ENCODE measurements at regions of chr7 and their contacts with region 1.

Region 1: GRCh38 chr7:21253740-21254687 is 173.9 kb upstream of the SP4 start:
- DNase-seq: peak in 13 of 14 experiments; percentile 1 to 56 (median 16)
- ATAC-seq: peak; percentile 65
- H3K4me3 ChIP-seq: no peak overlapping the region
- H3K4me3 Mint-ChIP-seq: peak overlapping the region; percentile 25
- H3K27ac ChIP-seq: no peak overlapping the region
- H3K27ac Mint-ChIP-seq: no peak overlapping the region
- H3K4me1 ChIP-seq: peaks cover 2% of the 10 kb centered on the region
- H3K4me1 Mint-ChIP-seq: no peaks in the 10 kb centered on the region
- H3K27me3 ChIP-seq: peaks cover 13 to 43% of the 10 kb centered on the region in 2 experiments
- H3K27me3 Mint-ChIP-seq: peaks cover 71% of the 10 kb centered on the region
- CTCF ChIP-seq: peak; percentile 55

Region 2: GRCh38 chr7:19728716-19729115 is 1525.3 kb before region 1 on chr7:
- CTCF ChIA-PET with region 1: no interaction called
- POLR2A ChIA-PET with region 1: no interaction called
- intact Hi-C with region 1: loop called in 1 of 2 experiments (anchors 10 kb)
- DNase-seq: no peak
- ATAC-seq: no peak
- H3K4me3 ChIP-seq: no peak overlapping the region
- H3K4me3 Mint-ChIP-seq: no peak overlapping the region
- H3K27ac ChIP-seq: no peak overlapping the region
- H3K27ac Mint-ChIP-seq: no peak overlapping the region
- H3K4me1 ChIP-seq: no peaks in the 10 kb centered on the region
- H3K4me1 Mint-ChIP-seq: no peaks in the 10 kb centered on the region
- H3K27me3 ChIP-seq: peaks cover 0 to 16% of the 10 kb centered on the region in 2 experiments
- H3K27me3 Mint-ChIP-seq: peaks cover 58% of the 10 kb centered on the region
- CTCF ChIP-seq: no peak

Region 3: GRCh38 chr7:21507626-21508343 is 253.8 kb after region 1 on chr7:
- CTCF ChIA-PET with region 1: no interaction called
- POLR2A ChIA-PET with region 1: no interaction called
- intact Hi-C with region 1: loop called in 1 of 2 experiments (anchors 2 kb)
- DNase-seq: peak in 6 of 14 experiments; percentile 3 to 53 (median 38)
- ATAC-seq: no peak
- H3K4me3 ChIP-seq: no peak overlapping the region
- H3K4me3 Mint-ChIP-seq: no peak overlapping the region
- H3K27ac ChIP-seq: no peak overlapping the region
- H3K27ac Mint-ChIP-seq: no peak overlapping the region
- H3K4me1 ChIP-seq: no peaks in the 10 kb centered on the region
- H3K4me1 Mint-ChIP-seq: no peaks in the 10 kb centered on the region
- H3K27me3 ChIP-seq: no peaks in the 10 kb centered on the region
- H3K27me3 Mint-ChIP-seq: no peaks in the 10 kb centered on the region
- CTCF ChIP-seq: peak; percentile 40

Region 4: GRCh38 chr7:21526007-21526406 is 272.0 kb after region 1 on chr7:
- CTCF ChIA-PET with region 1: no interaction called
- POLR2A ChIA-PET with region 1: no interaction called
- intact Hi-C with region 1: loop called in 1 of 2 experiments (anchors 5 kb)
- DNase-seq: peak in 4 of 14 experiments; percentile 11 to 40 (median 36)
- ATAC-seq: no peak
- H3K4me3 ChIP-seq: no peak overlapping the region
- H3K4me3 Mint-ChIP-seq: no peak overlapping the region
- H3K27ac ChIP-seq: no peak overlapping the region
- H3K27ac Mint-ChIP-seq: no peak overlapping the region
- H3K4me1 ChIP-seq: no peaks in the 10 kb centered on the region
- H3K4me1 Mint-ChIP-seq: no peaks in the 10 kb centered on the region
- H3K27me3 ChIP-seq: no peaks in the 10 kb centered on the region
- H3K27me3 Mint-ChIP-seq: no peaks in the 10 kb centered on the region
- CTCF ChIP-seq: peak; percentile 63

Region 5: GRCh38 chr7:21850531-21851285 is 596.7 kb after region 1 on chr7:
- CTCF ChIA-PET with region 1: no interaction called
- POLR2A ChIA-PET with region 1: no interaction called
- intact Hi-C with region 1: loop called in 1 of 2 experiments (anchors 10 kb)
- DNase-seq: no peak
- ATAC-seq: no peak
- H3K4me3 ChIP-seq: no peak overlapping the region
- H3K4me3 Mint-ChIP-seq: no peak overlapping the region
- H3K27ac ChIP-seq: peak overlapping the region in 1 of 2 donors; percentile 53
- H3K27ac Mint-ChIP-seq: peak overlapping the region; percentile 82
- H3K4me1 ChIP-seq: peaks cover 11% of the 10 kb centered on the region
- H3K4me1 Mint-ChIP-seq: peaks cover 43% of the 10 kb centered on the region
- H3K27me3 ChIP-seq: no peaks in the 10 kb centered on the region
- H3K27me3 Mint-ChIP-seq: no peaks in the 10 kb centered on the region
- CTCF ChIP-seq: no peak

Region 6: DNA sequence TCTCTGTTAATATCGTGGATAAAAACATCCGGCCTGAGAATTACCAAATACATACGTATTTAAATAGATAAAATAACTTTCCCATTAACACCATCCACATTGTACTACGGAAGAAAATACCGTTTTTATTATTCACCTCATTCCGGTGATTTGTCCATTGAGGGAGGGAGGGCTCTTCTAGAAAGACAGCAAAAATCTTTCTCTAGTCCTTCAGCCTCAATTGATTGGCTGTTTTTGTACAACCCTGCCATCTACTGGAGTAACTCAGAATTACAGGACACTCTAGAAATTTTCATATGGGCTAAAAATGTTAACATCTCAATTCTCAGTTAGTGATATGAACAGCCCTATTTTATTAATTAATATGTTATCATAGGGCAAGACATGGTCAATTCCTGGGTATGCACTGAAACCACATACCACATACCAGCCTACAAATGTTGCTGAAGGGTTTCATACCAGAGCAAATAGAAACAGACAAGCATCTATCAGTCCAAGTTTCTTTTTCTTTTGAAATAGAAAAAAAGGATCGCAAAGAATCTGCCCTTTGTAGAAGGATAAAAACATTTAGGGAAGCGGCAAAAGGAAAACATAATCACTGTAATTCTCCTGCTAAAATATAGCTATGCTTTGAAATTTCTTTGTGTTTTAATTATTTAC is 747.5 kb after region 1 on chr7:
- CTCF ChIA-PET with region 1: no interaction called
- POLR2A ChIA-PET with region 1: no interaction called
- intact Hi-C with region 1: loop called (anchors 1 to 2 kb)
- DNase-seq: peak in 4 of 14 experiments; percentile 41 to 69 (median 64)
- ATAC-seq: peak; percentile 68
- H3K4me3 ChIP-seq: no peak overlapping the region
- H3K4me3 Mint-ChIP-seq: no peak overlapping the region
- H3K27ac ChIP-seq: no peak overlapping the region
- H3K27ac Mint-ChIP-seq: no peak overlapping the region
- H3K4me1 ChIP-seq: no peaks in the 10 kb centered on the region
- H3K4me1 Mint-ChIP-seq: peaks cover 4% of the 10 kb centered on the region
- H3K27me3 ChIP-seq: no peaks in the 10 kb centered on the region
- H3K27me3 Mint-ChIP-seq: peaks cover 5% of the 10 kb centered on the region
- CTCF ChIP-seq: peak; percentile 93

Region 7: GRCh38 chr7:22082886-22083703 is 829.1 kb after region 1 on chr7:
- CTCF ChIA-PET with region 1: no interaction called
- POLR2A ChIA-PET with region 1: no interaction called
- intact Hi-C with region 1: loop called (anchors 5 kb)
- DNase-seq: peak; percentile 65 to 87 (median 76)
- ATAC-seq: peak; percentile 97
- H3K4me3 ChIP-seq: peak overlapping the region; percentile 66
- H3K4me3 Mint-ChIP-seq: peak overlapping the region; percentile 89
- H3K27ac ChIP-seq: peak overlapping the region in 1 of 2 donors; percentile 29
- H3K27ac Mint-ChIP-seq: peak overlapping the region; percentile 67
- H3K4me1 ChIP-seq: peaks cover 14% of the 10 kb centered on the region
- H3K4me1 Mint-ChIP-seq: peaks cover 11% of the 10 kb centered on the region
- H3K27me3 ChIP-seq: peaks cover 2 to 3% of the 10 kb centered on the region in 2 experiments
- H3K27me3 Mint-ChIP-seq: peaks cover 23% of the 10 kb centered on the region
- CTCF ChIP-seq: peak; percentile 97

Measured in CD4-positive, alpha-beta T cell (primary cell).